CD8-positive, alpha-beta T cell (primary cell): ENCODE measurements at regions of chr10 and their contacts with region 1.

Region 1: DNA sequence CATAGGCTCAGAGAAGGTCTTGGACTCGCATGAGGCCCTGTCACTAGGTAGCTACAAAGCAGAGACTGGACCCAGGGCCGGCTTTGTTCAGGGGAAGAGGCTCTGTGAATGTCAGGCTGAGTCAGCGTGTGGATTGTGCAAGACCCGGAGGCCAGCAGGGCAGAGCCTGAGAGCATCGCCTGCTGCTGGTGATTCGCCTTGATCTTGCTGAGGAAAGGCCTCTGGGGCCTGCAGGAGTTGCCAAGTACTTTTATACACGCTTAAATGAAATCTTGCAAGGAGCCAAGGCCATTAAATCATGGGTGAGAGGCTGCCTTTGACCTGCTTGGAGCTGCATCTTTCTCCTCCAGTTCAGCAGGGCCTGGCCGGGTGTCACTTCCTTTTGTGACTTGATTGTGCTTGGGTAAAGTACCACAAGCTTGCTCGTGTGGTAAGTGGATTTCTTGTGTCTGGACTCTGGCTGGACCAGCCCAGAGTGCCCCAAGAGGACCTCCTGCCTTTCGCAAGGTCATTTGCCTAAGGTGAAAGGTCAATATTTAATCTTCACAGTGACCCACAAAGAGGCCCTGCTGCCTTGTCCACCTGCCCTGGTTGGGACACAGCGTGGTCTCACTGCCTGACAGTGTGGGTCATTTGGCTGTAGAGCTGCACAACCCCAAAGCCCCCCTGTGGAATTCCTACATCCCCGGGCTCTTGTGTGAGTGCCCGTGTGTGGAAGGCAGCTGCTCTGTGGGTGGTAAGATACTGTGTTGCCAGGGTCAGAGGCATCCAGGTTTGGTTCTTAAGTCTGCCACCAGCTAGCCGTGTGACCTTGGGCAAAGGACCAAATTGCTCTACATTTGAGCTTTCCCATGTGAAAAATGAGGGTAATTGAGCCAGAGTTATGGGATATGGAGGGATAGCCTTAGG is 38.6 kb upstream of the SH2D4B start:
- DNase-seq: peak in 7 of 9 experiments; percentile 27 to 66 (median 55)
- ATAC-seq: peak; percentile 39
- H3K4me3 ChIP-seq: peak overlapping the region; percentile 12 to 29
- H3K4me3 Mint-ChIP-seq: peak overlapping the region; percentile 74
- H3K27ac ChIP-seq: peak overlapping the region; percentile 11 to 84
- H3K27ac Mint-ChIP-seq: peak overlapping the region; percentile 96
- H3K4me1 ChIP-seq: peaks cover 98% of the 10 kb centered on the region
- H3K4me1 Mint-ChIP-seq: peaks cover 97% of the 10 kb centered on the region
- H3K27me3 ChIP-seq: no peaks in the 10 kb centered on the region
- H3K27me3 Mint-ChIP-seq: no peaks in the 10 kb centered on the region
- CTCF ChIP-seq: no peak

Region 2: GRCh38 chr10:80429521-80429966 is 69.5 kb before region 1 on chr10:
- CTCF ChIA-PET with region 1: no interaction called
- POLR2A ChIA-PET with region 1: no interaction called
- intact Hi-C with region 1: no loop called
- DNase-seq: no peak
- ATAC-seq: no peak
- H3K4me3 ChIP-seq: no peak overlapping the region
- H3K4me3 Mint-ChIP-seq: no peak overlapping the region
- H3K27ac ChIP-seq: no peak overlapping the region
- H3K27ac Mint-ChIP-seq: no peak overlapping the region
- H3K4me1 ChIP-seq: no peaks in the 10 kb centered on the region
- H3K4me1 Mint-ChIP-seq: no peaks in the 10 kb centered on the region
- H3K27me3 ChIP-seq: no peaks in the 10 kb centered on the region
- H3K27me3 Mint-ChIP-seq: no peaks in the 10 kb centered on the region
- CTCF ChIP-seq: no peak

Region 3: GRCh38 chr10:80487791-80488538 is 11.1 kb before region 1 on chr10:
- CTCF ChIA-PET with region 1: interaction called, 137 read pairs
- POLR2A ChIA-PET with region 1: interaction called, 107 read pairs
- intact Hi-C with region 1: loop called in 1 of 2 experiments (anchors 1 kb)
- DNase-seq: peak in 8 of 9 experiments; percentile 55 to 87 (median 74)
- ATAC-seq: peak; percentile 68
- H3K4me3 ChIP-seq: peak overlapping the region; percentile 15 to 29
- H3K4me3 Mint-ChIP-seq: peak overlapping the region; percentile 77
- H3K27ac ChIP-seq: peak overlapping the region; percentile 24 to 75
- H3K27ac Mint-ChIP-seq: peak overlapping the region; percentile 92
- H3K4me1 ChIP-seq: peaks cover 98% of the 10 kb centered on the region
- H3K4me1 Mint-ChIP-seq: peaks cover 96% of the 10 kb centered on the region
- H3K27me3 ChIP-seq: no peaks in the 10 kb centered on the region
- H3K27me3 Mint-ChIP-seq: no peaks in the 10 kb centered on the region
- CTCF ChIP-seq: no peak